ENCODE measurements at regions of chr1 and their contacts with region 1.

Region 1: DNA sequence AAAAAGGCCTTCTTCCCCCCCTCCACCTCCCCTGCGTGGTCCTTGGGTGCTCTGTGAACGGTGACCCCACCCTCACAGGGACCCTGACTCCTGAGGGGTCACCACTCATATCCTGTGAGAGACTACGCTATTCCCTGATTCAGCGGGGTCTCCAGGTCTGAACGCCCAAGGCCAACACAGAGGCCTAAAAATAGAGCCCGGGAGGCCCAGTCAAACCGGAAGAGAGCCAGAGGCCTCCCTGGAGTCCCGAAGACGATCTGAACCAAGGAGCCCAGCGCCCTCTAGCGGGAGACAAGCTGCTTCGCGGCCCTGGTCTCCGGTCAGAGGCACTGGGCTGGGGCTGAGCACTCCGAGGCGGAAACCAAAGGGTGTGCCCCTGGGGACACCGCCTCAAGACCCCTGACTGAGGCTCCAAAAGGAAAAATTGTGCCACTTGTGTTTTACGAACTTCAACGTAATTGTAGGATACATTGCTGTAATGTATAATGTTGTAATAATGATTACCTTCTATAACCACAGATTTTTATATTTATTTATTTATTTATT is 42.4 kb upstream of the PSEN2 start:
- DNase-seq: peak; percentile 96
- H3K27ac ChIP-seq: no peak overlapping the region; the same call in 1 of the 2 replicates
- CTCF ChIP-seq: peak; percentile 90

Region 2: DNA sequence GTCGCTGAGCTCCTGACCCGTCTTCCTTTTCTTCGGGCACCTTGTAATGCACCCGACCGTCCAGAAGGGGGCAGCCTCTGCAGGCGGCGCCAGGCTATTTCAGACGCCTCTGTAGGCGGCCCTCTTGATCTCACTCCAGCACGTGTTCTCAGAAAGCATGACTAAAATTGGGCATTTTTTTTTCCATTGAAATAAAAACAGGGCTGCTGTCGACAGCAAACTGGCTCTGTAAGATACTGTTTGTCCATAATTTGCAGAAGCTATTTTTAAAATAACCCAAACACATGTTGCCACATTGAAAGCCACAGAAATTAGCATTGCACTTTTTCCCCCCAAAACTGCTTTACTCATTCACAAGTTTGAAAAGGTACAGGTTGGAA is 201.5 kb before region 1 on chr1:
- CTCF ChIA-PET with region 1: interaction called, 17 read pairs
- POLR2A ChIA-PET with region 1: no interaction called
- DNase-seq: peak; percentile 72
- H3K27ac ChIP-seq: no peak overlapping the region
- CTCF ChIP-seq: peak; percentile 91

Region 3: GRCh38 chr1:226634166-226634588 is 193.9 kb before region 1 on chr1:
- CTCF ChIA-PET with region 1: interaction called, 35 read pairs
- POLR2A ChIA-PET with region 1: no interaction called
- DNase-seq: peak; percentile 79
- H3K27ac ChIP-seq: peak overlapping the region; percentile 19
- CTCF ChIP-seq: peak; percentile 90